ENCODE measurements at regions of chr15 and their contacts with region 1.

Region 1: GRCh38 chr15:49421991-49422390 is 1.1 kb upstream of the FGF7 start:
- DNase-seq: peak in 6 of 7 donors; percentile 21 to 59 (median 28)
- H3K4me3 ChIP-seq: peak overlapping the region in 1 of 4 donors; percentile 41
- H3K27ac ChIP-seq: no peak overlapping the region
- H3K4me1 ChIP-seq: no peaks in the 10 kb centered on the region
- H3K27me3 ChIP-seq: no peaks in the 10 kb centered on the region
- CTCF ChIP-seq: peak; percentile 60 to 100 (median 86)
- POLR2A ChIP-seq: no peak

Region 2: DNA sequence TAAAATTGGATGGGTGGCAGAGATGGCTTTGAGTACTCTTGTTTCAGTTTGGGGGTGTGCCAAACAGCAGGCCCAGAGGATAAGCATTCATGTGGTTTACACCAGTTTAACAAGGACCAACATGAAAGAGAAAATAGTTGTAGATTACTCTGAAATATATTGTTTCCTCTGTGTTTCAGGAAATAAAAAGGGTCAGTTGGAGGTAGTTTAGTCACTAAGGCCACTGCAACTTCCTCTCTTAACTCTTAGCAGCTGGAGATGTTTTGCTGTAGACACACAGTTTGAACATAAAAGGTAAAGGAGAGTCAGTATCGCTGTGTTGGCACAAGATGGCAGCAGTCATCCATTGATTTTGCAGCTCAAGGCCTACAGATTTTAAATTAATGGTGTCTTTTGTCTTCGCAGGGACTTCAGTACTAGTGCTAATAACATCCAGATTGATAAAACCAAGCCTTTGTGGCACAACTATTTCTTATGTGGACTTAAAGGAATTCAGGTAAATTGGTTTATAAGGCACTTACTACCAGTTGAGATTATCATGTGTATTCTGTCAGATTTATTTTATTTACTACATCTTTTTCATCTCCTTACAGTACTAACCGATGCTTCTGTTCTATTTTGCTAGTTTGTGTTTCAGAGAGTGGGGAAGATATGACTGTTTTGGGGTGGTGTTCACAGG is 186.4 kb before region 1 on chr15:
- intact Hi-C with region 1: loop called (anchors 2 to 10 kb)
- DNase-seq: peak; percentile 44 to 84 (median 58)
- H3K4me3 ChIP-seq: no peak overlapping the region
- H3K27ac ChIP-seq: no peak overlapping the region
- H3K4me1 ChIP-seq: peaks cover 0 to 19% of the 10 kb centered on the region in 2 donors
- H3K27me3 ChIP-seq: no peaks in the 10 kb centered on the region
- CTCF ChIP-seq: peak; percentile 46 to 90 (median 86)
- POLR2A ChIP-seq: no peak

Region 3: DNA sequence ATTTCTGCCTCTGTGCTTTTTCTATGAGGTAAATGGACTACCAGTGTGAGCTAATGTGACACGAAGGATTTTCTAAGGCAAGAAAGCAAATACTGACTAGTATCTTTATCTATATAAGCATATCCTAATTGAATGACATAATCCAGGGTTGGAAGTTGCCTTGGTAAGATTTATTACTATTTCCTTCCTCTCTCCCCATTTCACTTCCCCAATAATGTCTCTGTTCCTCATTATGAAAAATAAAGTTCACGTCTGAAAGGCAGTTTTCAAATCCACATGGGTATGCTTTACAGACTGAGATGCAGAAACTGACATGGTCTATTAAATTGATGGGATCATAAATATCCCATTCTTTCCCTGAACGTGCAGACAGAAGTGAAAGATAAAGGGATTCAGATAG is 284.8 kb after region 1 on chr15:
- intact Hi-C with region 1: no loop called
- DNase-seq: no peak
- H3K4me3 ChIP-seq: no peak overlapping the region
- H3K27ac ChIP-seq: no peak overlapping the region
- H3K4me1 ChIP-seq: no peaks in the 10 kb centered on the region
- H3K27me3 ChIP-seq: no peaks in the 10 kb centered on the region
- CTCF ChIP-seq: no peak
- POLR2A ChIP-seq: no peak

Measured in adrenal gland (tissue), 19 donors.